ENCODE measurements at regions of chr2 and their contacts with region 1.

Region 1: DNA sequence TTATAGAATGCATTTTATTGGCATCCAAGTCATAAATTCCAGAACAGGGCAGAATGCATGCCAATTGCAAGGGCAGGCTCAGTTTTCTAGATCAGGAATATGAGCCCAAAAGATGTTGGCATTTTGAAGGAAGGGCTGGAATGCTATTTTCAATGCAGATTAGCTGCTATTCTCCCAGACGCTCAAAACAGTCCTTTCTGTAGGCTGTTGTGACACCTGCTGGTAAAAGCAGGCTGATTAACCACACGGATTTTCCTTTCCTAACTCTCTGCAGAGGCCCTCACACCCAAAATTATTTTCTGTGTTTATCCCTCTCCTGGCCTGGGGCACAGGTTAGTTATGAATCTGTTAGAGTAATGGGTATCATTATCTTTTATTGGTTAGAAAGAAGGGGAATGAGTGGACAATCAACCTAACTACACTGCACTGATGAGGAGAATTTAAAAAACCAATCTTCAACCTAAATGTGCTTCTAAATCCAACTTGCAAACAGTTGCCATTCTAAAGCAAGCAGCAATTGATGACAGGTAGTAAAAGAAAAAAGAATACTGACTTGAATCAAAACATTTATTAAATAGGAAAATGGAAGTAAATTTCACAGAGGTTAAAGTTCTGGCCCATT is 94.0 kb downstream of the PLA2R1 start:
- DNase-seq: peak; percentile 63
- H3K4me3 Mint-ChIP-seq: no peak overlapping the region
- H3K27ac Mint-ChIP-seq: no peak overlapping the region
- H3K4me1 Mint-ChIP-seq: no peaks in the 10 kb centered on the region
- H3K27me3 Mint-ChIP-seq: no peaks in the 10 kb centered on the region

Region 2: GRCh38 chr2:158903711-158904443 is 1064.5 kb before region 1 on chr2:
- intact Hi-C with region 1: loop called (anchors 5 kb)
- DNase-seq: no peak
- H3K4me3 Mint-ChIP-seq: no peak overlapping the region
- H3K27ac Mint-ChIP-seq: no peak overlapping the region
- H3K4me1 Mint-ChIP-seq: no peaks in the 10 kb centered on the region
- H3K27me3 Mint-ChIP-seq: peaks cover 4% of the 10 kb centered on the region

Region 3: GRCh38 chr2:159131914-159132281 is 836.5 kb before region 1 on chr2:
- intact Hi-C with region 1: loop called (anchors 5 kb)
- DNase-seq: no peak
- H3K4me3 Mint-ChIP-seq: no peak overlapping the region
- H3K27ac Mint-ChIP-seq: no peak overlapping the region
- H3K4me1 Mint-ChIP-seq: peaks cover 2% of the 10 kb centered on the region
- H3K27me3 Mint-ChIP-seq: no peaks in the 10 kb centered on the region

Region 4: DNA sequence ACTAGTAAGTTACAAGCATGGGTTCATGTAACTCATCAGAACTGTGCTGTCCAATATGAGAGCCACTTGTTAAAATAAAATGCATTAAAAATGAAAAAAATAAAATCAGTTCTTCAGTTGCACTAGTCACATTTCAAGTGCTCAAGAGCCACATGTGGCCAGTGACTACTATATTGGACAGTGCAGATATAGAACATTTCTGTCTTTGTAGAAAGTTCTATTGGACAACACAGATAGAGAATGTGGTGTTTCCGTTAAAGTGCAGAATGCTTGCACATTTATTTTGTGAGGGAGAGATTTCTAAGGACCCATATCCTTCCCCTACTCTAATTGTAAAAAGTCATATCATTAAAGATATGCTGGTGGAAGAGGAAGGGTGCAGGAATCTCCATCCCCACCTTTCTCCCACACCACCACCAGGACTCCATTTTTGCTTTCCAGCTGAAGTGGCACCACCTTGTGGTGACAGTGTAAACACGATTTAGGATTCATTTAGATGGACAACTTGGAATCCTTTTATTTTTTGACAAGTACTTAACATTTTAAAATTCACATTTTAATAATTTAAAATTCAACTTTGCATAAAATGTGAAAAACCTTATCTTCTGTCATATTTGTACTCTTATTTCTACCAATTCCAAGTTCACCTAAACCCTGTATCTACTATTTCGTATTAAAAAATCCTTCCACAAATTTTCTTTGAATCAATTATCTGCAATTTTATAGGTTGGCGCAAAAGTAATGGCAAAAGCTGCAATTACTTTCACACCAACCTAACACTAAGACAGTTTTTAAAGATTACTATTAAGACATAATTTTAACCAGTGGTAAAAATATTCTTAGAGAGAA is 161.0 kb before region 1 on chr2:
- intact Hi-C with region 1: loop called (anchors 10 kb)
- DNase-seq: peak; percentile 68
- H3K4me3 Mint-ChIP-seq: no peak overlapping the region
- H3K27ac Mint-ChIP-seq: no peak overlapping the region
- H3K4me1 Mint-ChIP-seq: no peaks in the 10 kb centered on the region
- H3K27me3 Mint-ChIP-seq: no peaks in the 10 kb centered on the region